CD14-positive monocyte (primary cell): ENCODE measurements at regions of chr5 and their contacts with region 1.

Region 1: DNA sequence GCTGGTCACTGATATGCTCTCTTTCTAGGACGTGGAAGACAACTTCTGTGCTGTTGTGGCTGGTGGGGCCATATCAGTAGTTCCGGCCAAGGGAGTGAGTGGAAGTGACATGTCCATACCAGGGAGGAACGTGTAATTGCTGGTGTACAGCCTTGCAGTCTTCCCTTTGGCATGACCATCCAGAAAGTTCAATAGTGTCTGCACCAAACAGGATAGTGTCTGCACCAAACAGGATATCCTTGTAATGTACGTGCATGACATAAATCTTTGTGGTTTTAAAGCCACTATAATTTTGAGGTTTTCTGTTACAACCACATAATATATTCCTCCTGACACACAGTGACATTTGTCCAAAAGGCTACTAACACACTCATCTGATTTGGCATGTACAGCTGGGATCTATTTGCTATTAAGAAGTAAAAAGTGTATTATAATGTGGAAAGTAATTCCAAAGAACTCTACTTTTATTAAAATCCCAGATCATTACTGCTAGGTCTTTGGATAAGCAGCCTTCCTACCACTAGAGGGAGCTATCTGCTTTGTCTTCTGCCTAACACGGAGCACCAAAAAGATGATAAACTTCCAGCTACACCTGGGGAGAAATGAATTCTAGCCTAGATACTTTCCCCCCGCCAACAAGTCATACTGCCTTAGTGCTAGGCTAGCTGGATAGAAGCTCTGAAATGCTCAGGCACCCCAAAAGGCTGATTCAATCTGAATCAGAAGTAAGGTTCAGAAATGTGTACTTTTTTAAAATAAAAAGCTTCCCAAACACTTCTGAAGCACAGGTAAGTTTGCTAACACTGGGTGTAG is 52.7 kb downstream of the RNF145 start:
- DNase-seq: peak; percentile 30 to 62 (median 60)
- H3K4me3 ChIP-seq: no peak overlapping the region
- H3K4me3 Mint-ChIP-seq: no peak overlapping the region
- H3K27ac ChIP-seq: no peak overlapping the region
- H3K27ac Mint-ChIP-seq: peak overlapping the region in 2 of 7 donors; percentile 32 to 62
- H3K4me1 ChIP-seq: no peaks in the 10 kb centered on the region
- H3K4me1 Mint-ChIP-seq: no peaks in the 10 kb centered on the region
- H3K27me3 ChIP-seq: no peaks in the 10 kb centered on the region
- H3K27me3 Mint-ChIP-seq: peaks cover 0 to 4% (median under 1%) of the 10 kb centered on the region in 3 donors
- CTCF ChIP-seq: peak; percentile 88

Region 2: DNA sequence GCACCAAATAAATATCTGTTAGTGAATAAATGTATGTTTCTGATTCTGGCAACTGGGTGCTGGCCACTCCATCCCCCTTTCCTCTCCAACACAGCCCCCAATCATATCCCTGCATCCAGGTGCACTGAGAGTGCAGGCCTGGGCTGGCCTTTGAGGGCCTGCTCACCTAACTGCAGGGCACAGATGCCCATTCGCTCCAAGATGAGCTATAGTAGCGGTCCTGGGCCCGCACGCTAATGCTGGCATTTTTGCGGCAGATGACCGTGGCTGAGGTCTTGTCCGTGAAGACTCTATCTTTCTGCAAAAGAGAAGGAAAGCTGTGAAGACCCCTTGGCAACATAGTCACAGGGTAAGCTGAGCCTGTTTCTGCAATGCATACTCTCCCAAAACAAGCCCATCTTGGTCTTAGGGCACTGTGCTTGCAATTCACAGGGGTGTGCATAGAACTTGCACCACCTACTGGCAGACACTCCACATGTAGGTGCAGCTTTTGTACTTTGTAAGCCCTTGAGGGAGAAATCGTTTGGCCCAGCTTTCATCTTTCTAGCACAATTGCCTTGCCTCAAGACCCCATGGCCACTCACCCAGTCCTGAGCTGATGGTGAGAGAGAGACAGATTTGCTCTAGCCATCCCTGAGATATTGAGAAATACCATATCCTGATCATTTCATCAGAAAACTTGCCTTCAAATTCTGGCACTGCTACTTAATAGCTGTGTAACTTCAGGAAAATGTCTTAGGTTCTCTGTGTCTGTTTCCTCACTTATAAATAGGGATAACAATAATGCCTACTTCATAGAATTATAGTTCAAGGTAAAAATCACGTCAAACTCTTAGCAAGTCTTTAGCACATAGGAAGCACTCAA is 160.1 kb after region 1 on chr5:
- intact Hi-C with region 1: loop called (anchors 5 to 10 kb)
- DNase-seq: peak in 1 of 3 donors; percentile 7
- H3K4me3 ChIP-seq: no peak overlapping the region
- H3K4me3 Mint-ChIP-seq: no peak overlapping the region
- H3K27ac ChIP-seq: no peak overlapping the region
- H3K27ac Mint-ChIP-seq: no peak overlapping the region
- H3K4me1 ChIP-seq: no peaks in the 10 kb centered on the region
- H3K4me1 Mint-ChIP-seq: peaks cover 2% of the 10 kb centered on the region
- H3K27me3 ChIP-seq: peaks cover 0 to 2% of the 10 kb centered on the region in 2 donors
- H3K27me3 Mint-ChIP-seq: peaks cover 0 to 5% (median 3%) of the 10 kb centered on the region in 3 donors
- CTCF ChIP-seq: peak; percentile 50

Region 3: GRCh38 chr5:159990506-159990905 is 833.9 kb after region 1 on chr5:
- intact Hi-C with region 1: loop called in 1 of 2 experiments (anchors 10 kb)
- DNase-seq: no peak
- H3K4me3 ChIP-seq: no peak overlapping the region
- H3K4me3 Mint-ChIP-seq: no peak overlapping the region
- H3K27ac ChIP-seq: no peak overlapping the region
- H3K27ac Mint-ChIP-seq: no peak overlapping the region
- H3K4me1 ChIP-seq: peaks cover 6 to 7% of the 10 kb centered on the region in 2 donors
- H3K4me1 Mint-ChIP-seq: peaks cover 5% of the 10 kb centered on the region
- H3K27me3 ChIP-seq: peaks cover 17 to 26% of the 10 kb centered on the region in 2 donors
- H3K27me3 Mint-ChIP-seq: peaks cover 25 to 47% (median 35%) of the 10 kb centered on the region in 3 donors
- CTCF ChIP-seq: no peak